H1 (cell line): ENCODE measurements at regions of chr19 and their contacts with region 1.

Region 1: GRCh38 chr19:45862564-45863334 is at the start of gene SYMPK:
- DNase-seq: peak; percentile 96 to 97
- H3K4me3 ChIP-seq: peak within 1 kb of the TSS; percentile 81 to 99 (median 90)
- H3K27ac ChIP-seq: peak within 1 kb of the TSS; percentile 90
- H3K4me1 ChIP-seq: peaks cover 0 to 18% (median 8%) of the 10 kb centered on the region in 4 experiments; a peak in 6 of 7 replicates
- H3K27me3 ChIP-seq: no peaks in the 10 kb centered on the region; a peak in 1 of 7 replicates
- CTCF ChIP-seq: no peak
- EP300 ChIP-seq: no peak
- POLR2A ChIP-seq: peak; percentile 80 to 90
- RAD21 ChIP-seq: no peak
- total RNA-seq, gene SYMPK: 81.5 and 93.6 TPM in 2 replicates

Region 2: GRCh38 chr19:45687599-45687998 is 175.2 kb before region 1 on chr19:
- CTCF ChIA-PET with region 1: no interaction called
- POLR2A ChIA-PET with region 1: no interaction called
- DNase-seq: no peak
- H3K4me3 ChIP-seq: no peak overlapping the region
- H3K27ac ChIP-seq: no peak overlapping the region
- H3K4me1 ChIP-seq: no peaks in the 10 kb centered on the region
- H3K27me3 ChIP-seq: no peaks in the 10 kb centered on the region
- CTCF ChIP-seq: peak in 2 of 3 experiments; percentile 9 to 23; a peak in 2 of 4 replicates
- EP300 ChIP-seq: no peak
- POLR2A ChIP-seq: no peak
- RAD21 ChIP-seq: no peak

Region 3: DNA sequence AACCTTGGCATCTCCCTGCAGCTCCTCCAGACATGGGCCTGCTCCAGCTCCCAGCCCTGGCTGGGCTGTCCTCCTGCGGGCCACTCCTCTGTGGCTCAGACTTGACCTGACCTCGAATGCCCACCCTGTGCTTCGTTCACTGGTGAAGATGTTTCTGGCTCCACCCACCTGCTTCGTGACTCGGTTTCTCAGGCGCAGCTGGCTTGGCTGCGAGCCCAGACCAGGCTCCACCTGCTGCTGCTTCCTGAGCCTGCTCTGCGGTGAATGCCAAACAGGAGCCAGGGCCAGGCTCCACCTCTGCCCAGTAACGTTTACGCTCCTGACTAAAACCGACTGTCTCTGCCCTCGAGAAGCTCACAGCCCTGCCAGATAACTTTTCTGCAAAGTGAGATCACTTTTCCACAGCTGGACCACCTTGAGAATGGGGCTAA is 38.7 kb before region 1 on chr19:
- CTCF ChIA-PET with region 1: interaction called, 3 read pairs
- POLR2A ChIA-PET with region 1: interaction called, 50 read pairs
- DNase-seq: no peak
- H3K4me3 ChIP-seq: no peak overlapping the region
- H3K27ac ChIP-seq: no peak overlapping the region
- H3K4me1 ChIP-seq: no peaks in the 10 kb centered on the region; a peak in 1 of 7 replicates
- H3K27me3 ChIP-seq: no peaks in the 10 kb centered on the region
- CTCF ChIP-seq: no peak
- EP300 ChIP-seq: no peak
- POLR2A ChIP-seq: no peak
- RAD21 ChIP-seq: no peak

Region 4: DNA sequence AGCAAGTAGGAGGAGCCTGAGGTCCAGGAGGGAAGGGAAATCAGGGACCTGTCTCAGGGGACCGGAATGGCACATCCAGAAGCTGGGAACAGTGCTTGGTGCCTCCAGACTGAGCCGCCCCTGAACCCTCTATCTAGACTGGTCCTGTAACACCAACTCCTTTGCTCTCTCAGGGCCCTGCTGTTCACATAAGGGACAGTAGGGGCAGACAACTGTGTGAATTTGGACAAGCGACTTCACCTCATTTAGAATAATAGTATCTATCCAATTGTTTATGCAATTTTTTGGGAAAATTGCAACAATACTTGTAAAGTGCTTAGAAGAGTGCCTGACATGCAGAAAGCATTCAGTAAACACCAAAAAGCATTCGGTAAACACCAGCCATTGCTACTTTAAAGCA is 13.8 kb before region 1 on chr19:
- CTCF ChIA-PET with region 1: interaction called, 13 read pairs
- POLR2A ChIA-PET with region 1: interaction called, 19 read pairs
- DNase-seq: no peak
- H3K4me3 ChIP-seq: no peak overlapping the region
- H3K27ac ChIP-seq: no peak overlapping the region
- H3K4me1 ChIP-seq: no peaks in the 10 kb centered on the region
- H3K27me3 ChIP-seq: no peaks in the 10 kb centered on the region; a peak in 1 of 7 replicates
- CTCF ChIP-seq: peak in 2 of 3 experiments; percentile 12 to 28; a peak in 2 of 4 replicates
- EP300 ChIP-seq: no peak
- POLR2A ChIP-seq: no peak
- RAD21 ChIP-seq: 0 out of 4 replicates have a peak, but pooled peaks of 1 of the 2 experiments have one; percentile 3

Region 5: DNA sequence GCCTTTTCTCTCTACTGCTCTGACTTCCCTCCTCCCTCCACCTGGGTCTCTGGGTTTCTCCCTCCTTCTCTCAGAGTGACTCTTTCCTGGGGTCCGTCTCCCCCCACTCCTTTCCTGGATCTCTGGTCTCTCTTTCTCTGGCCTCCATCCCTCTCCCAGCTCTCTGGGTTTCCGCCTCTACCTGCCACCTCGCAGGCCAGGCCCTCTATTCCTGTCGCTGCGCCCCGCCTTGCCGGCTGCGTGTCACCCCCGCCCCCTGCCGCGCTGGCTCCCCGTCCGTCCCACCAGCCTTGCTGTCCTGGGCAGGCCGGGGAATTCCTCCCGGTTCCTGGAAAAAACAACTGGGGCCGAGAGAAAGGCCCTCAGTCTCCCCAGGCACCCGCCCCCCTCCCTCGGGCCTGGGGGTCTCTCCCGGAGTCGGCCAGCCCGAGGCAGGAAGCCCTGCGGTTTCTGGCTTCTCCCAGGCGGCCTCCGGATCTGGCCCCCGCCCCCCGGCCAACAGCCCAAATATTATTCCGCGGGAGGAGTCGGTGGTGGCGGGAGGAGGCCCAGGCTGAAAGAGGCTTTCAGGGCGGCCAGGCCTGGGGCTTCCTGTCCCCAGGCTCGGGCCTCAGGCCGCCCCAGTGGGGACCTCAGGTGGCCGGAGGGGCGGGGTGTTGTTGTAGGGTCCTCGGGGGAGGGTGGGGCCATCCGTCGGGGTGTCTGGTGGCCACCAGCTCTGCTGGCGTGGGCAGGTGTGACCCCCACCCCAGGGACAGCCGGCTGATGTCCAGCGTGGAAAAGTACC is 13.9 kb after region 1 on chr19:
- CTCF ChIA-PET with region 1: interaction called, 208 read pairs
- POLR2A ChIA-PET with region 1: interaction called, 277 read pairs
- DNase-seq: peak in 1 of 2 experiments; percentile 74
- H3K4me3 ChIP-seq: peak overlapping the region; percentile 34 to 67 (median 42)
- H3K27ac ChIP-seq: no peak overlapping the region
- H3K4me1 ChIP-seq: peaks cover 1 to 17% (median 13%) of the 10 kb centered on the region in 4 experiments
- H3K27me3 ChIP-seq: no peaks in the 10 kb centered on the region; a peak in 1 of 7 replicates
- CTCF ChIP-seq: no peak
- EP300 ChIP-seq: no peak
- POLR2A ChIP-seq: no peak
- RAD21 ChIP-seq: no peak

Region 6: DNA sequence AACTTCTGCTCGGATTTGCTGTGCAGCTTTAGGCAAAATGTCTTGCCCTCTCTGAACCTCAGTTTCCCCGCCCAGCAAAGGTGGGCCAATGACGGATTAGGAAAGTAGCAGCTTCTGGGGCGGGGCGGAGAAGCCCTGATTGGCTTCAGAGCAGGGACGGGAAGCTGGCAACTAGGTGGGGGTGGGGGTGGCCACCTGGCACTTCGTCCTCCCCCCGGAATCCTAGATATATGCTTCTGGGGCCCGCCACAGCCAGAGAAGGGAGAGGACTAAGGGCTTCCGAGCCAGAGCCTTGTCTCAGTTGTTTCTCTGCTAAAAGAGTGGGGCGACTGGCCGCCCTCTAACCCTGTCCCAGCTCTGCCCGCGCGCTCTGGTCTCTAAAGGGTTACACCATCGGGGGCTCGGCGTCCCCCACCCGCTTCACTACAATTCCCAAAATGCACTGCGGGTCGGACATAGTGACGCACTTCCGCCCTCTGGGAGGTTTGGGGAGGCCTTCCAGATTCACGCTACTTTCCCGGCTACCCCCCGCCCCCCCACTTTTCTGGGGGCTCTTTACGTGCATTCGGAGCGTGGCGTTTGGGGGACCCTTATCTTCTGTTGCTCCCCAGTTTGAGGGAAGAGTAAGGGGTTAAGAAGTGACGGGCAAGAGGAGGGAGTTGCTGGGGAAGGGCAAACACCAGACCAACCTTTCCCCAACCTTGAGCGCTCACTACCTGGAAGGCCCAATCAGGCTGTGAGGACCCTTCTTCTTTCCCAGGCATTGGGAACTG is 23.9 kb after region 1 on chr19:
- CTCF ChIA-PET with region 1: interaction called, 208 read pairs
- POLR2A ChIA-PET with region 1: interaction called, 277 read pairs
- DNase-seq: peak in 1 of 2 experiments; percentile 93
- H3K4me3 ChIP-seq: peak overlapping the region; percentile 71 to 80 (median 78)
- H3K27ac ChIP-seq: peak overlapping the region; percentile 86
- H3K4me1 ChIP-seq: peaks cover 5 to 22% (median 14%) of the 10 kb centered on the region in 4 experiments
- H3K27me3 ChIP-seq: no peaks in the 10 kb centered on the region
- CTCF ChIP-seq: no peak
- EP300 ChIP-seq: no peak; a peak in 1 of 3 replicates
- POLR2A ChIP-seq: peak; percentile 68 to 70; a peak in 2 of 3 replicates
- RAD21 ChIP-seq: no peak

Region 7: DNA sequence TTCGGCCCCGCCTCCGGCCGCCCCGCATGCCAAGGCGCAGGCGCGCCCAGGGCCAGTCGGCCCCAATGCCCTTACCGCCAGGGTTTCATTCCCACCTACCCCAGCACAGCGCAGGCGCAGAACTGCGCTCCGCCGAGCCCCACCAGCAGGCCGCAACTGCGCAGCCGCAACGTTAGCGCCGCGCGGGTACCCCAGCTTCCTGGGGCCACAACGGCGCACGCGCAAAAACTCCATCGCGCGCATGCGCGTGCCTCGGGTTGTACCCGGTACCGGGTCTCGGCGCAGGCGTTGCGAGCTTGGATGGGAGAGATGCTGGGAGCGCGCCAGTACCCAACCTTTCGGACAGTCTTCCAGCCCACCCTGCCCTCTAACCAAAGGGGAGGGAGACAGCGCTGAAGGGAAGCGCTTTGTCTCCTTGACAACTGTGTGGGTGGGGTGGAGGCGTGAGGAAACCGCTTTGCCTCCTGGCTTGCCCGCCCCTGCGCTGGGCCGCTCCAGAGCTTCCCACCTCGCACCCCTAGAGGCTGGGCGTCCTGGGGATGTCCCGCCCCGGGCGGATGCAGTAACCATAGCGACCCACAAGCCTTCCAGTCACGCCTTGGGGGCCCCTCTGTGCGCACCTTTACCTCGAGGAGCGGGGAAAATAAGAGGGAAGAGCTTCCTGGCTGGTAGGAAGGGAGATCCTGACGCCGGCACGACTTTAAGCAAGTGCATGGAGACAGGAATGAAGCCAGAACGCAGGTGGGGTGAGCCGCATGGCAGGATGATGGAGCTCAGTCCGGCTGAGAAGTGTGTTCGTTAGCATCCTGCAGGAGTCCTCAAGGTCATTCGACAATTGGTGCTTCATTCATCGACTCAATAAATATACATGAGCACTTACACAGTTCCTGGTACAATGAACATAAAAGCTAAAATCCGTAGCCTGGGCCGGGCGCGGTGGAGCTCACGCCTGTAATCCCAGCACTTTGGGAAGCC is 40.2 kb after region 1 on chr19:
- CTCF ChIA-PET with region 1: interaction called, 11 read pairs
- POLR2A ChIA-PET with region 1: interaction called, 10 read pairs
- DNase-seq: peak; percentile 95 to 100
- H3K4me3 ChIP-seq: peak overlapping the region; percentile 48 to 76 (median 72)
- H3K27ac ChIP-seq: peak overlapping the region; percentile 43; the same call in 1 of the 2 replicates
- H3K4me1 ChIP-seq: peaks cover 0 to 2% (median under 1%) of the 10 kb centered on the region in 4 experiments; a peak in 3 of 7 replicates
- H3K27me3 ChIP-seq: peaks cover 0 to 16% (median 11%) of the 10 kb centered on the region in 4 experiments; a peak in 6 of 7 replicates
- CTCF ChIP-seq: no peak
- EP300 ChIP-seq: no peak
- POLR2A ChIP-seq: no peak; a peak in 1 of 3 replicates
- RAD21 ChIP-seq: no peak

Region 8: DNA sequence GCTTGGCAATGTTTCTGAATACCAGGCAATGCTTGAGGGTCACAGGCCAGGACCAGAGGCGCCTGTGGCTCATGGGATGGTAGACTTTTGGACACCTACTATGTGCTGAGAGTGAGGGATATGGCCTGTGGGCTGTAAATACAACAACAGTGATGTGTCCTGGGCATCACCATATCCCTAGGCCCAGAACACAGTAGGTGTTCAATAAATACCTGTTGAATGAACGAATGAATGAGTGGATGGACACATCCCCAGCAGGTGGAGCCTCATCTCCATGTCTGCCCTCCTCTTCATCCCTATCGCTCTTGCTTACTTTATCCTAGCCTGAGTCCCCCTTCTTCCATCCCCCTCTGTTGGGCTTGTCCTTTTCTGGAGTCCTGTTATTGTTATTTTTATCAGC is 68.3 kb after region 1 on chr19:
- CTCF ChIA-PET with region 1: no interaction called
- POLR2A ChIA-PET with region 1: no interaction called
- DNase-seq: no peak
- H3K4me3 ChIP-seq: no peak overlapping the region
- H3K27ac ChIP-seq: no peak overlapping the region
- H3K4me1 ChIP-seq: peaks cover 0 to 3% (median 0%) of the 10 kb centered on the region in 4 experiments; a peak in 2 of 7 replicates
- H3K27me3 ChIP-seq: peaks cover 1 to 18% (median 8%) of the 10 kb centered on the region in 4 experiments; a peak in 5 of 7 replicates
- CTCF ChIP-seq: peak in 2 of 3 experiments; percentile 10 to 27; a peak in 2 of 4 replicates
- EP300 ChIP-seq: no peak
- POLR2A ChIP-seq: no peak
- RAD21 ChIP-seq: peak; percentile 33 to 34